Sciatic nerve (tissue), 2 donors: ENCODE measurements at regions of chr1 and their contacts with region 1.

Region 1: GRCh38 chr1:67749844-67750689 is 65.1 kb downstream of the GADD45A start:
- DNase-seq: no peak
- ATAC-seq: peak; percentile 64

Region 2: GRCh38 chr1:66848193-66848592 is 901.9 kb before region 1 on chr1:
- intact Hi-C with region 1: no loop called
- DNase-seq: no peak
- ATAC-seq: no peak

Region 3: DNA sequence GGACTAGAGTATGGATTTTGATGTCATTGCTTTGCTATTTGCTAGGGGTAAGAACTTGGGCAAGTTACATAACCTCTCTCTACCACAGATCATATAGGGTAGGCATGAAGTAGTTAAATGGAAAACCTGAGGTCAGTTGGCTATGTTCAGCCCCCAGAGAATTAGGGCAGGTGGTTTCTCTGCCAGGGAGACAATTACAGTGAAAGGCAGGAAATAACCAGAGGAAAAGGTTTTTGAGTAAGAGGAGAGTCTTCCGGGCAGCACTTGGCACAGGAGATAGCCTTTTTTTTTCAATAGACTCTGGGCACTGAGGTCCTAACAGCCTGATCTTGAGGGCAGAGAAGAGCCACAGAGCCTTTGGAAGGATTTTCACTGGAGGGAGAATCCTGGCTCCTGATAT is 303.2 kb before region 1 on chr1:
- intact Hi-C with region 1: no loop called
- DNase-seq: no peak
- ATAC-seq: no peak

Region 4: DNA sequence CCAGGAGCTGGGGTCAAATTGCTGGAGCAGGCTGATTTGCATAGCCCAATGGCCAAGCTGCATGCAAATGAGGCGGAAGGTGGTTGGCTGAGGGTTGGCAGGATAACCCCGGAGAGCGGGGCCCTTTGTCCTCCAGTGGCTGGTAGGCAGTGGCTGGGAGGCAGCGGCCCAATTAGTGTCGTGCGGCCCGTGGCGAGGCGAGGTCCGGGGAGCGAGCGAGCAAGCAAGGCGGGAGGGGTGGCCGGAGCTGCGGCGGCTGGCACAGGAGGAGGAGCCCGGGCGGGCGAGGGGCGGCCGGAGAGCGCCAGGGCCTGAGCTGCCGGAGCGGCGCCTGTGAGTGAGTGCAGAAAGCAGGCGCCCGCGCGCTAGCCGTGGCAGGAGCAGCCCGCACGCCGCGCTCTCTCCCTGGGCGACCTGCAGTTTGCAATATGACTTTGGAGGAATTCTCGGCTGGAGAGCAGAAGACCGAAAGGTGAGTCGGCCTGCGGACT is 65.0 kb before region 1 on chr1 and contains the start of gene GADD45A:
- intact Hi-C with region 1: loop called (anchors 10 kb)
- DNase-seq: peak; percentile 98
- ATAC-seq: peak; percentile 97
- total RNA-seq, gene GADD45A: 34.6 TPM